Spleen (tissue), 13 donors: ENCODE measurements at regions of chr22 and their contacts with region 1.

Region 1: GRCh38 chr22:37428649-37429586 is 1.6 kb upstream of the ELFN2 start:
- DNase-seq: no peak
- H3K4me3 ChIP-seq: no peak overlapping the region
- H3K27ac ChIP-seq: no peak overlapping the region
- H3K4me1 ChIP-seq: peaks cover 2 to 36% (median 17%) of the 10 kb centered on the region in 6 donors
- H3K27me3 ChIP-seq: peaks cover 6 to 100% (median 64%) of the 10 kb centered on the region in 7 donors
- CTCF ChIP-seq: peak; percentile 29 to 83 (median 68)
- POLR2A ChIP-seq: no peak

Region 2: GRCh38 chr22:37077884-37078485 is 350.9 kb before region 1 on chr22:
- intact Hi-C with region 1: no loop called
- DNase-seq: peak; percentile 93
- H3K4me3 ChIP-seq: no peak overlapping the region
- H3K27ac ChIP-seq: no peak overlapping the region
- H3K4me1 ChIP-seq: peaks cover 11 to 28% (median 23%) of the 10 kb centered on the region in 6 donors
- H3K27me3 ChIP-seq: peaks cover 0 to 45% (median 0%) of the 10 kb centered on the region in 7 donors
- CTCF ChIP-seq: peak; percentile 70 to 97 (median 94)
- POLR2A ChIP-seq: no peak

Region 3: DNA sequence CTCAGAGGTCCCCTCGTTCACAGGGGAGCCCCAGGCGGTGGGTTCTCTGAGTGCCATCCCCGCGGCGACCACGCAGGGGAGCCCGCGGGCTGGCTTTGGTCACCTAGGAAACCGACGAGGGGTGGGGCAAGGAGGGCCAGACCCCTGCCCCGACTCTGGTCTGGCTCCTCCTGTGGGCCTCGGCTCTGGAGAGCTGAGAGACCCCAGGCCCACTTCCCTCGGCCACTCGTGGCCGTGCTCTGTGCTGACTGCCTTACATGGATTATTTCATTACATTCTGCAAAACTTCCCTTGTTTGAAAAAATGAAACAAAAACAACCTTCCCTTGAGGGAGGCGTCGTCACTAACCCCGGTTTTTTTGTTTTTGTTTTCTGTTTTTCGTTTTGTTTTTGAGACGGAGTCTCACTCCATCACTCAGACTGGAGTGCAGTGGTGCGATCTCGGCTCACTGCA is 161.8 kb before region 1 on chr22:
- intact Hi-C with region 1: loop called (anchors 10 kb)
- DNase-seq: peak; percentile 93
- H3K4me3 ChIP-seq: peak overlapping the region; percentile 27 to 68 (median 46)
- H3K27ac ChIP-seq: peak overlapping the region; percentile 72 to 92 (median 82)
- H3K4me1 ChIP-seq: peaks cover 7 to 56% (median 37%) of the 10 kb centered on the region in 6 donors
- H3K27me3 ChIP-seq: peaks cover 0 to 8% (median 0%) of the 10 kb centered on the region in 7 donors
- CTCF ChIP-seq: peak; percentile 76 to 94 (median 92)
- POLR2A ChIP-seq: no peak

Region 4: DNA sequence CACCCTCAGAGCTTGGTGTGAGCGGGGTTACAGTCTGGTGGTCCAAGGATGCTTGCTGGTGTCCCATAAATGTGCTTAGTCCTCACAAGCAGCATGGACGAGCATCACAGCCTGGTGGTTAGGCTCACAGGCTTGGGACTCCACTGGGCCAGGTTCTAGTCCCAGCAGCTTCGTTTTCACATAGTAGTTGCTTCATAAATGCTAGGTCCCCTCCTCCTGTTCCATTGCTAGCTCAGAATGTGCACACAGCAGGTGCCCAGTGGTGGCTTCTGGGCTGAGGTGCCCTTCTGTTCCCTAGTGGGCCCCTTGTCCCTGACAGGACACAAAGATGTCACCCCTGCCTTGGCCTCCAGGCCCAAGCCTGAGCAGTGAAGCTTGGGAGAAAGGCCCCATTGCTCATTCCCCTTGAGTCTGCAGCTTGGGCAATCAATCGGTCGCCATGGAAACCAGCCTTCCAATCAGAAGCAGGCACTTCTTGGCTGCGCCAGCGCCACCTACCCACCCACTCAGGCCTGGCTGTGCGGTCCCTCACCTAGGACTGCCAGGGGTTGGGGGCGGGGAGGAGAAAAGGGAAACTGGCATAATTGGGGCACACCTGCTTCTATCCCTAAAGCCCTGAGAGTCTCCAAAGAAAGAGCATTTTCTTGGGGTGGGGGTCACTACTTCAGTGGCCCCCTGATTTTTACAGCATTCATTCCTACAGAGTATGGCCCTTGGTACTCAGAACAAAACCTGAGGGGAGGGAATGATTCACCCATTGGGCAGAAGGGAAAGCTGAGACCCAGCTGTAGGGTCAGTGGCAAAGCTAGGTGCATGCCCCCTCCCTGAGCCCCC is 98.5 kb before region 1 on chr22:
- intact Hi-C with region 1: loop called (anchors 10 kb)
- DNase-seq: no peak
- H3K4me3 ChIP-seq: no peak overlapping the region
- H3K27ac ChIP-seq: no peak overlapping the region
- H3K4me1 ChIP-seq: peaks cover 0 to 17% (median 7%) of the 10 kb centered on the region in 6 donors
- H3K27me3 ChIP-seq: peaks cover 7 to 97% (median 71%) of the 10 kb centered on the region in 7 donors
- CTCF ChIP-seq: no peak
- POLR2A ChIP-seq: no peak